MCF 10A (cell line): ENCODE measurements at regions of chr6 and their contacts with region 1.

Region 1: DNA sequence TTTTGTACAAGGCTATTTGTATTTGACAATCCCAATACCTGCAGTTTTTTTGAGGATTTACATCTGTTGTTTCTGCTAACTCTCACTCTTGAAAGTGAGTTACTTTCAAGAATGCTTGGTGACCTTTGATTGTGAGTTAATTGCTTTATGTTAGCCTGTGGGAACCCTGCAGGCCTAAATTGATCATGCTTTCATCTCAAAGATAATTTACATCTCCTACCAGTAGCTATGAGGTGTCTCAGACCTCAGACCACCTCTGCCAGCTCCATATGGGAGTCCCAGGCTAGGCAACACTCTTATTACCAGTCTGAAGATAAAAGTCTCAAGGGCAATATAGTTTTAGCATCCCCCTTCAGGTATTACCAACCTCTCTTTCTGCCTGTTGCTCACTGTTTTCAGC is 116.4 kb upstream of the THEMIS start:
- DNase-seq: no peak
- H3K4me3 Mint-ChIP-seq: no peak overlapping the region
- H3K27ac Mint-ChIP-seq: no peak overlapping the region
- H3K4me1 Mint-ChIP-seq: peaks cover 6% of the 10 kb centered on the region
- H3K27me3 Mint-ChIP-seq: no peaks in the 10 kb centered on the region
- CTCF ChIP-seq: no peak

Region 2: DNA sequence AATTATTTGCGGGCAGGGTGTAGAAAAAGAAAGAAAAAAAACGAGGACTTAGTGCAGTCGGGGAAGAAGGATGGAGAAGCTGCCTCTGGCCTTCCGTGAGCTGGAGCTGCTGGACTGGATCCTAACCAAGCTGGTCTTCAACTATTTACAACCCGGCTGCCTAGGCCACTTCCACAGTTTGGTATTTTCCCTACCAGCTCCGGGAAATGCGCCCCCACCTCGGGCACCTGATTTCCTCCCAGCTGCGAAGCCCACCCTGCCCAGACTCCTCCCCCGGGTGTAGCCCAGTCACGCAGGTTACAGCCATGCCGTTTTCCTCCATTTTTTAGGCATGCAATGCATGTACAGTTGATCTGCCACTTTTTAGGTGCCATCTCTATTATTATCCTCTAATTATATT is 137.6 kb before region 1 on chr6:
- CTCF ChIA-PET with region 1: no interaction called
- POLR2A ChIA-PET with region 1: no interaction called
- intact Hi-C with region 1: loop called (anchors 10 kb)
- DNase-seq: no peak
- H3K4me3 Mint-ChIP-seq: no peak overlapping the region
- H3K27ac Mint-ChIP-seq: no peak overlapping the region
- H3K4me1 Mint-ChIP-seq: no peaks in the 10 kb centered on the region
- H3K27me3 Mint-ChIP-seq: no peaks in the 10 kb centered on the region
- CTCF ChIP-seq: no peak

Region 3: GRCh38 chr6:127914256-127914655 is 103.0 kb before region 1 on chr6:
- CTCF ChIA-PET with region 1: no interaction called
- POLR2A ChIA-PET with region 1: no interaction called
- intact Hi-C with region 1: no loop called
- DNase-seq: peak; percentile 17
- H3K4me3 Mint-ChIP-seq: no peak overlapping the region
- H3K27ac Mint-ChIP-seq: no peak overlapping the region
- H3K4me1 Mint-ChIP-seq: no peaks in the 10 kb centered on the region
- H3K27me3 Mint-ChIP-seq: no peaks in the 10 kb centered on the region
- CTCF ChIP-seq: no peak

Region 4: GRCh38 chr6:127971945-127972391 is 45.3 kb before region 1 on chr6:
- CTCF ChIA-PET with region 1: no interaction called
- POLR2A ChIA-PET with region 1: no interaction called
- intact Hi-C with region 1: no loop called
- DNase-seq: peak; percentile 35
- H3K4me3 Mint-ChIP-seq: peak overlapping the region; percentile 52
- H3K27ac Mint-ChIP-seq: peak overlapping the region; percentile 59
- H3K4me1 Mint-ChIP-seq: peaks cover 16% of the 10 kb centered on the region
- H3K27me3 Mint-ChIP-seq: no peaks in the 10 kb centered on the region
- CTCF ChIP-seq: no peak

Region 5: DNA sequence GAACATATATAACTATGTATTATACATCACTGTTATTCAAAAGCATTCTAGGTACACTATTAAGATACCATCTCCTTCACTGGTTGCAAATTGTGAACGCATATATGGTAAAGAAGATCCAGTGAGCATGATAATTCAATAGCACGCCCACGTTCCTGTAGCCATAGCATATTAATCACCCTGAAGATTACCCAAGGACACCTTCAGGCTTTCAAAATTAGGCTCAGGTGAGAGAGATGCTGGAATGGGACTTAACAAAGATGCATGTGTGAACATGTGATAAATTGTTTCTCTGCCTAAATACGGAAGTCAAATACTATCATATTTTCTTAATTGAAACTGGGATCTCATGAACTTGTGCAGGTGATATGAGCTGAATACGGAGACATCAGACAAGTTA is 199.6 kb after region 1 on chr6:
- CTCF ChIA-PET with region 1: no interaction called
- POLR2A ChIA-PET with region 1: no interaction called
- intact Hi-C with region 1: no loop called
- DNase-seq: no peak
- H3K4me3 Mint-ChIP-seq: no peak overlapping the region
- H3K27ac Mint-ChIP-seq: no peak overlapping the region
- H3K4me1 Mint-ChIP-seq: no peaks in the 10 kb centered on the region
- H3K27me3 Mint-ChIP-seq: no peaks in the 10 kb centered on the region
- CTCF ChIP-seq: no peak